Posterior vena cava (tissue), 2 donors: ENCODE measurements at regions of chr6 and their contacts with region 1.

Region 1: DNA sequence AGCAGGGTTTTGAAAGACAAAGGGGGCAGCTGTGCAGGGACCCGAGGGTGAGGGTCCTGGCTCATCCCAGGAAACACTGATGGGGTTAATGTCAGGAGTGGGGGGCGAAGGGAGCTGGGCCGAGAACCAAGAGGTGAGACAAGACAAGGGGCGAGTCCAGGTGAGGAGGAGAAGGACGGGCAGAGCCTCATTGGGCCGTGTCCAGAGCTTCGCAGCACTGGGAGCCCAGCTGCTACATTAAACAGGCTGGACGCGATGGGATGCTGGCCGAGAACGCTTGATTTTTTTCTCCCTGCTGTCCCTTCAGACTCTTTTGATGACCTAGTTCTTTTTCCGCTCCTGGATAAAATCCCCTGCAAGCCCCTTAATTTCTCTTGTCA is 172.8 kb upstream of the SNX9 start:
- DNase-seq: no peak

Region 2: GRCh38 chr6:157667211-157668008 is 17.2 kb after region 1 on chr6:
- intact Hi-C with region 1: no loop called
- DNase-seq: no peak

Region 3: DNA sequence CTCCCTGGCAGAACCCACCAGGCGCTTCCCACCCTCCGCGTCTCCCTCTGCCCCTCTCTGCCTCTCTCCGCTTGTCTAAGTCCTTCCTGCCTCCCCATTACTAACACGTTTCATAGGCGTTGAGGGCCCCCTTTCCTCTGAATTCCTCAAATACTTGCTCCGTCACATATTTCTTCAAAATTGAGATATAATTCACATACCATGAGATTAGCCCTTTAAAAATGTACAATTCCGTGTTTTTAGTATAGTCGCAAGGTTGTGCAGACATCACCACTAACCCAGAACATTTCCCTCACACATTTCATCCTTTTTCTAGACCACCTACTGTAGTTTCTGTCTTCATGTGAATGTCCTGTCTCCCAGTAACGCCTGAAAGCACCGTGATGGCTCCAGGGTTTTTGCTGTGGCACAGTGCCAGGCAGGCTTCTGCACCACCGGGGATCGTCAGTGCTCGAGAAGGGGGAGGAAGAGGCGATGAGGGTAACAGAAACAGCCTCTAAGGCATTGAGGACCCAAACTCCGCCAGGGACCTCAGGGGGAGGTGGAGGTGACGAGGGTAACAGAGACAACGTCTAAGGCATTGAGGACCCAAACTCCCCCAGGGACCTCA is 30.9 kb after region 1 on chr6:
- intact Hi-C with region 1: loop called in 1 of 2 experiments (anchors 1 kb)
- DNase-seq: no peak

Region 4: GRCh38 chr6:157800420-157801237 is 150.4 kb after region 1 on chr6:
- intact Hi-C with region 1: no loop called
- DNase-seq: no peak

Region 5: DNA sequence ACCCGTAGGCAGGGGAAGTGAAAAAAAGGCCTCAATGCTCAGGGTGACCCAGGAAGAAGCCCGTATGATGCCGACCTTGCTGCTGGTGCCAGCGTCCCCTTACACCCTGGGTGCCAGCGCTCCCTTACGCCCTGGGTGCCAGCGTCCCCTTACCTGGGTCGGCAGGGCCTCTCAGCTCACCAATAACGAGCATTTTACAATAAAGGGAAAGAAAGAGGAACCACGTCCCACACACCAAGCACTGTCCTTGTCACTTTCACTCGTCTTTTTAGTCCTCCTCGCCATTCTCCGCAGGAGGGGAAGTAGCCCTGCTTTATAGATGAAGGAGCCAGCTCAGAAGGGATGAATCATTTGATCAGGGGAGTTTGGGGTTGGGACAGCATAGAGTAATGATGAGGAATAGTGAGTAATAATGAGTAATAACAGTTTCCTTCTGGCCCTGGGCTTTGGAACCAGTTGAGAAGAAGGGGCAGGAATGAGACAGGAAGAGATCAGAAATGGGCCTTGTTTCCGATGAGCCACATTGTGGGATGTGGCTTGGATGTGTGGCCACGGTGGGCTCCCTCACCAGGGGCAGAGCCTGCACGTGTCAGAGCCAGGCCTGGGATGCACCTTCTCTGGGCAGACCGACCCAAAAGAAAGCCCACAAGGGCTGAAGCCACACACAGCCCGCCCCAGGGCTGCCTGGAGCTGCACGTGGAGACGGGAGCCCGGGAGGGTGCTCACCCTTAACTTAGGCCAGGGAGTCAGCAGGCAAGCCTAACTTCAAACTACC is 407.1 kb after region 1 on chr6:
- intact Hi-C with region 1: loop called in 1 of 2 experiments (anchors 10 kb)
- DNase-seq: peak; percentile 81